GM12878 (cell line): ENCODE measurements at regions of chrX and their contacts with region 1.

Region 1: DNA sequence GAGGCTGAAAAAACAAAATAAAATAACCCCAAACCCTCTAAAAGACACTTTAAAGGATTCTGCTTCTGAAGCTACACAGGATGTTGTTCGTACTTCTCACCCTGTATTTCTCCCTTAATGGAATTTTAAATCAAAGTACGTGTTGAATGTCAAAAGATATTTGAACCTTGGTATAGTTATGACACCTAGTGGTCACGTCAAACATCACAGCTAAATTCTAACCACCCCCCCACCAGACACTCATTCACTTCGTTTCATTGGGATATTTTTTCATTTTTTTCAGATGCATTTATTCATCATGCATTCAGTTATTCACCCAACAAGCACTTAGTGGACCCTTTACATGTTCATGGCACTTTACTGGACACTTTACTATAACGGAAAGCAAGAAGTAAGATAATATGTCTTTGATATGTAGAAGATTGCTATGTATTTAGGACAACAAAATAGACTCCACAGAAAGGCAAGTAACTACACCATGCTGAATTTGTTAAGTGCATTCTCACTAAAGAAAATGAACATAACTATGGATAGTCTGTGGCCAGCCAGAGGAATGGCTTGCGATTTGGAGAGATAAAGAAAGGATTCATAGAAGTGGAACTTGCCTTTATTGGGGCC is 62.5 kb upstream of the GPR174 start:
- DNase-seq: peak; percentile 61
- ATAC-seq: peak; percentile 87
- H3K4me3 ChIP-seq: no peak overlapping the region
- H3K27ac ChIP-seq: no peak overlapping the region
- H3K4me1 ChIP-seq: no peaks in the 10 kb centered on the region
- H3K27me3 ChIP-seq: no peaks in the 10 kb centered on the region
- CTCF ChIP-seq: peak; percentile 54 to 82 (median 63); a peak in 5 of 6 replicates
- EP300 ChIP-seq: no peak
- POLR2A ChIP-seq: no peak
- RAD21 ChIP-seq: peak; percentile 83

Region 2: GRCh38 chrX:78139160-78140123 is 942.6 kb before region 1 on chrX and contains the start of gene TAF9B:
- CTCF ChIA-PET with region 1: interaction called, 3 read pairs
- POLR2A ChIA-PET with region 1: no interaction called
- RAD21 ChIA-PET with region 1: no interaction called
- SMC1A ChIA-PET with region 1: no interaction called
- in situ Hi-C with region 1: no loop called
- intact Hi-C with region 1: loop called (anchors 10 kb)
- DNase-seq: peak; percentile 51
- ATAC-seq: peak; percentile 98
- H3K4me3 ChIP-seq: peak within 1 kb of the TSS; percentile 64
- H3K27ac ChIP-seq: peak within 1 kb of the TSS; percentile 51
- H3K4me1 ChIP-seq: no peaks in the 10 kb centered on the region
- H3K27me3 ChIP-seq: no peaks in the 10 kb centered on the region
- CTCF ChIP-seq: no peak
- EP300 ChIP-seq: no peak
- POLR2A ChIP-seq: peak; percentile 86
- RAD21 ChIP-seq: no peak
- polyA plus RNA-seq, gene TAF9B: 19.0 to 20.8 TPM

Region 3: DNA sequence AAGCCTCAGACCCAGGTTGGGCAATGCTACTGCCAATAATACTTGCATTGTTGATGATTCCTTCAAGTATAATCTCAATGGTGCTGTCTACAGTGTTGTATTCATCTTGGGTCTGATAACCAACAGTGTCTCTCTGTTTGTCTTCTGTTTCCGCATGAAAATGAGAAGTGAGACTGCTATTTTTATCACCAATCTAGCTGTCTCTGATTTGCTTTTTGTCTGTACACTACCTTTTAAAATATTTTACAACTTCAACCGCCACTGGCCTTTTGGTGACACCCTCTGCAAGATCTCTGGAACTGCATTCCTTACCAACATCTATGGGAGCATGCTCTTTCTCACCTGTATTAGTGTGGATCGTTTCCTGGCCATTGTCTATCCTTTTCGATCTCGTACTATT is 327.1 kb before region 1 on chrX:
- CTCF ChIA-PET with region 1: interaction called, 8 read pairs
- POLR2A ChIA-PET with region 1: interaction called, 3 read pairs
- RAD21 ChIA-PET with region 1: interaction called, 7 read pairs
- SMC1A ChIA-PET with region 1: interaction called, 4 read pairs
- in situ Hi-C with region 1: no loop called
- intact Hi-C with region 1: loop called (anchors 2 kb)
- DNase-seq: peak; percentile 49
- ATAC-seq: peak; percentile 94
- H3K4me3 ChIP-seq: no peak overlapping the region
- H3K27ac ChIP-seq: no peak overlapping the region
- H3K4me1 ChIP-seq: peaks cover 20% of the 10 kb centered on the region
- H3K27me3 ChIP-seq: no peaks in the 10 kb centered on the region
- CTCF ChIP-seq: peak; percentile 15 to 44 (median 32); a peak in 4 of 6 replicates
- EP300 ChIP-seq: no peak
- POLR2A ChIP-seq: no peak
- RAD21 ChIP-seq: peak; percentile 79

Region 4: DNA sequence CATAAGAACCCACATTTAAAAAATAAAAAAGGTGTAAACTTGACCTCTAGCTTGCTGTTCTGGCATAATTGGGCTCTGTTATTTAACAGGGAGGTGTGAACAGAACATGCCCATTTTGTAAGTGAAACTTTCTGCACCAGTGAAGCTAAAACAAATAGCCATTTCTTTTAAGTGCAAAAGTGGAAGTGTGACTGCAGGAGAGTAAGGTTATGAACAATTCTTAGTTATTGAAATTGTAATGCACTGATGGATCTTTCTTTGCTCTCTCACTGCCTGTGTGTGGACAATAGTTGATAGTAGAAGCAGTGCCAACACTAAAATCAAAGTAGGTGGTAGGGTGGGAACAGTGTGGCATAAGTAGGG is 124.3 kb before region 1 on chrX:
- CTCF ChIA-PET with region 1: interaction called, 5 read pairs
- POLR2A ChIA-PET with region 1: no interaction called
- RAD21 ChIA-PET with region 1: interaction called, 37 read pairs
- SMC1A ChIA-PET with region 1: interaction called, 47 read pairs
- in situ Hi-C with region 1: no loop called
- intact Hi-C with region 1: loop called (anchors 2 kb)
- DNase-seq: peak; percentile 93
- ATAC-seq: peak; percentile 84
- H3K4me3 ChIP-seq: peak overlapping the region; percentile 49; the same call in 1 of the 2 replicates
- H3K27ac ChIP-seq: peak overlapping the region; percentile 86
- H3K4me1 ChIP-seq: peaks cover 28% of the 10 kb centered on the region
- H3K27me3 ChIP-seq: no peaks in the 10 kb centered on the region
- CTCF ChIP-seq: no peak
- EP300 ChIP-seq: peak; percentile 72 to 97; a peak in 3 of 4 replicates
- POLR2A ChIP-seq: no peak
- RAD21 ChIP-seq: no peak

Region 5: DNA sequence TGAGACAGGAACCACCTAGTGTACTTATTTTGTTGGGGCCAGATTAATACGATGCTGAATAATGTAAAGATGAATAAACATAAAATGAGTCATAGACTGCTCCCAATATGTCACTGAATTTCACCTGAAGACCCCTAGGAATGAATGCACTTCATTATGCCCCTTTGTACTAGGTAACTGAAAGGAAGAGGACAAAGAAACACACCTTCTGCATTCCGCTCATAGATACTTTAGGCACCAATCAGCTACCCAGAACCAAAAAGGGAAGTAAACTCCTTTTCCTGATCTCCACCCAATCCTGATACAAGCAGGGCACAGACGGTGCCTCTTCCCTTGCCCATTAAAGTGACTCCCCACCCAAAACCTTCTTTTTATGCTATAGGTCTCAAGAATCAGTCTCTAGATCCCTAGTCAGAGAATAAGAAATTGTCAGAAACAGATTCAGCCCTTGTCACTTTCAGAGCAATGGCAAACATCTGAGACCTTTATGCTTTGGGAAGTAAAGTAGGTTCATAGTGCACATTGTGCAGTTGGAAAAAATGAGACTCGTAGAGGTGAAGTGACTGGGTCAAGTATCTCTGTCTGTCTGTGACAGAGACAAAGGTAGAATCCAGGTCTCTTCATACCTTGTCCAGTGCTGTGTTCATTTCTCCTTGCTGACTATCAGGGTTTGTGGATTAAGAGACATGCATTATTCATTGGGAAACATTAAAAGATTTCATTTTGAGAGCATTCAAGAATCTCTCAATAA is 64.8 kb after region 1 on chrX:
- CTCF ChIA-PET with region 1: interaction called, 4 read pairs
- POLR2A ChIA-PET with region 1: no interaction called
- RAD21 ChIA-PET with region 1: interaction called, 15 read pairs
- SMC1A ChIA-PET with region 1: interaction called, 10 read pairs
- in situ Hi-C with region 1: no loop called
- intact Hi-C with region 1: loop called (anchors 2 kb)
- DNase-seq: peak; percentile 45
- ATAC-seq: peak; percentile 52
- H3K4me3 ChIP-seq: peak overlapping the region; percentile 39
- H3K27ac ChIP-seq: peak overlapping the region; percentile 73
- H3K4me1 ChIP-seq: peaks cover 8% of the 10 kb centered on the region
- H3K27me3 ChIP-seq: no peaks in the 10 kb centered on the region
- CTCF ChIP-seq: no peak
- EP300 ChIP-seq: no peak
- POLR2A ChIP-seq: no peak
- RAD21 ChIP-seq: no peak

Region 6: GRCh38 chrX:79270401-79270800 is 188.4 kb after region 1 on chrX:
- CTCF ChIA-PET with region 1: interaction called, 25 read pairs
- POLR2A ChIA-PET with region 1: no interaction called
- RAD21 ChIA-PET with region 1: interaction called, 44 read pairs
- SMC1A ChIA-PET with region 1: interaction called, 36 read pairs
- in situ Hi-C with region 1: no loop called
- intact Hi-C with region 1: loop called (anchors 1 kb)
- DNase-seq: peak; percentile 63
- ATAC-seq: peak; percentile 99
- H3K4me3 ChIP-seq: no peak overlapping the region
- H3K27ac ChIP-seq: no peak overlapping the region
- H3K4me1 ChIP-seq: no peaks in the 10 kb centered on the region
- H3K27me3 ChIP-seq: no peaks in the 10 kb centered on the region
- CTCF ChIP-seq: peak; percentile 74 to 91 (median 74); a peak in 5 of 6 replicates
- EP300 ChIP-seq: no peak
- POLR2A ChIP-seq: no peak
- RAD21 ChIP-seq: peak; percentile 97